Activated CD4-positive, alpha-beta T cell treated with anti-CD3 and anti-CD28 coated beads for 36 hours (primary cell): ENCODE measurements at regions of chr20 and their contacts with region 1.

Region 1: DNA sequence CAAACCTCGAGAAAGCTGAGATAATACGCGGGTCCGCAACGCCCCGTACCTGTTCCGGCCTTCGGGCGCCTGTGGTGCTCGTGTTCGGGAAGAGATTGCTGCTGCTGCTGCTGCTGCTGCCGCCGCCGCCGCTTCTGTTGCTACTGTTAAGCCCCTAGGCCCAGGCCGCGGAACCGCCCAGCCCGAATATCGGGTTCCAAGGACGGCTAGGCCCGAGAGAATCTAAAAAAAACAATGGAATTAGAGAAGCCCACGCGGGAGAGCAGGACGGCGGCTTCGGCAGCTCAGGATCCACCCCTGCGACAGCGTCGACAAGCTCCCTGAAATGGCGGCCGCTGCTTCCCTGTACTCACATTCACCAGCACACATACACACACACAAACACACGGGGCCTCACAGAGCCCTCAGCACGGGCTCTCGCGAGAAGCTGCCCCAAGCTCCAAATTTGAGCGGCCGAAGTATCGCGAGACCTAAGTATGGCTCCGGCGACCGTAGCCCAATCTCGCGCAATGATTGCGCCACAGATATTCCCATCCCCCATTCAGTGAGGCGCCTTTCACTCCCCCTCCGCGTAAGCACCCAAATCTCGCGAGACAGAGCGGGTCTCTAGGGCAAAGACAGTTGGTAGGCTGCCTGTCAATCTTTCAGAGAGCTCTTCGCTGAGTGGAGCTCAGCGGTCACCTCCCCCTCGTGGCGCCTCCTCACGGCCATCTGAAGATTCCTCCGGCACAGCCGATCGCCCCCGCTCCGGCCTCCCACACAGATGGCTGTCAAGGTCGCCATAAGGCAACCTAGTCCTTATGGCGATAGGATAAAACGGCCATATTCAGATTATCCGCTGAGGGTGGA is at the start of gene RBM39:
- DNase-seq: peak; percentile 100
- ATAC-seq: peak; percentile 88
- H3K4me3 Mint-ChIP-seq: peak within 1 kb of the TSS; percentile 90
- H3K27ac Mint-ChIP-seq: peak within 1 kb of the TSS; percentile 100
- H3K4me1 Mint-ChIP-seq: peaks cover 45% of the 10 kb centered on the region
- H3K27me3 Mint-ChIP-seq: no peaks in the 10 kb centered on the region
- total RNA-seq, gene RBM39: 303 to 356 TPM

Region 2: GRCh38 chr20:35511814-35512420 is 230.2 kb before region 1 on chr20:
- CTCF ChIA-PET with region 1: no interaction called
- POLR2A ChIA-PET with region 1: no interaction called
- intact Hi-C with region 1: no loop called
- DNase-seq: no peak
- ATAC-seq: no peak
- H3K4me3 Mint-ChIP-seq: no peak overlapping the region
- H3K27ac Mint-ChIP-seq: peak overlapping the region; percentile 7
- H3K4me1 Mint-ChIP-seq: peaks cover 3% of the 10 kb centered on the region
- H3K27me3 Mint-ChIP-seq: no peaks in the 10 kb centered on the region

Region 3: GRCh38 chr20:35541783-35542588 is 200.1 kb before region 1 on chr20 and contains the start of gene ERGIC3:
- CTCF ChIA-PET with region 1: no interaction called
- POLR2A ChIA-PET with region 1: interaction called, 3 read pairs
- intact Hi-C with region 1: loop called in 1 of 2 experiments (anchors 1 kb)
- DNase-seq: peak; percentile 99
- ATAC-seq: peak; percentile 99
- H3K4me3 Mint-ChIP-seq: peak within 1 kb of the TSS; percentile 83
- H3K27ac Mint-ChIP-seq: peak within 1 kb of the TSS; percentile 83
- H3K4me1 Mint-ChIP-seq: peaks cover 15% of the 10 kb centered on the region
- H3K27me3 Mint-ChIP-seq: no peaks in the 10 kb centered on the region
- total RNA-seq, gene ERGIC3: 109 to 127 TPM

Region 4: GRCh38 chr20:35699127-35699975 is 42.8 kb before region 1 on chr20 and contains the starts of genes NFS1 and ROMO1:
- CTCF ChIA-PET with region 1: interaction called, 10 read pairs
- POLR2A ChIA-PET with region 1: interaction called, 11 read pairs
- intact Hi-C with region 1: no loop called
- DNase-seq: peak; percentile 94
- ATAC-seq: peak; percentile 92
- H3K4me3 Mint-ChIP-seq: peak within 1 kb of the TSS; percentile 87
- H3K27ac Mint-ChIP-seq: peak within 1 kb of the TSS; percentile 98
- H3K4me1 Mint-ChIP-seq: peaks cover 44% of the 10 kb centered on the region
- H3K27me3 Mint-ChIP-seq: no peaks in the 10 kb centered on the region
- total RNA-seq, gene NFS1: 43.2 to 44.6 TPM
- total RNA-seq, gene ROMO1: 50.4 to 112 TPM

Region 5: GRCh38 chr20:35726759-35727711 is 15.1 kb before region 1 on chr20:
- CTCF ChIA-PET with region 1: interaction called, 14 read pairs
- POLR2A ChIA-PET with region 1: interaction called, 12 read pairs
- intact Hi-C with region 1: no loop called
- DNase-seq: no peak
- ATAC-seq: no peak
- H3K4me3 Mint-ChIP-seq: no peak overlapping the region
- H3K27ac Mint-ChIP-seq: no peak overlapping the region
- H3K4me1 Mint-ChIP-seq: peaks cover 39% of the 10 kb centered on the region
- H3K27me3 Mint-ChIP-seq: no peaks in the 10 kb centered on the region

Region 6: DNA sequence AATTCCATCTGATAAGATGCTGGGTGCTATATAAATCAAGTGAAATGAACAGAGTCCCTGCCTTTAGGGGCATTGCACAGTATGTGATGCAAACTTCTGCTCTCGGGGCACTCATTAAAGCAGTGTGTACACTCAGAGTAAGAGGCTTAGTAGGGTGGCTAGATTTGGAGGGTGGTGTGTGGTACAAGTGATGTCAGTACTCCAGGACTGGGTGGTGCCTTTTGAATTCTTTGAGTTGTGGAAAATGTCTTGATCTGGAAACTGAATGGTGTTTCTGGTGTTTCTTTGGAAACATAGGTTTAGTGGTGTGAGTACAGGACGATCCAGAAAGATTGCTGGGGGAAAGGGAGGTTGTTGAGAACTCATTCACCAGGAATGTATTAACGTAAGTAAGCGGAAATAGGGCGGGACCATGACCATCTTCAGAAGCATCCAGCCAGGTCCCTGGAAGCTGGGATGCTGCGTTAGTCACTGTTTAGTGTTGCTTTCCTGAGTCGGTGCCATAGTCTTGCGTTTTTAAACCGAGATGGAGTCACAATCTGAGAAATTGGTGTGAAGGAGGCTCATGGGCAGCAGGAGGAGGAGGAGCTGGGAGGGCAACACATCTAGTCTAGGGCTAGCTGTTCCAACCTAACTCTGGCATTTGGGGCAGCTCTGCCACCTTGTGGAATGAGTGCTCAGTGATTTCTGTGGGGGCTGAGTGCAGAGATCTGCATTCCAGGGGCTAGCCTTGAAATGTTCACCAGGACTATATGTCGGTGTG is 141.8 kb after region 1 on chr20:
- CTCF ChIA-PET with region 1: no interaction called
- POLR2A ChIA-PET with region 1: interaction called, 4 read pairs
- intact Hi-C with region 1: loop called in 1 of 2 experiments (anchors 2 kb)
- DNase-seq: peak; percentile 76
- ATAC-seq: peak; percentile 93
- H3K4me3 Mint-ChIP-seq: no peak overlapping the region
- H3K27ac Mint-ChIP-seq: peak overlapping the region; percentile 66
- H3K4me1 Mint-ChIP-seq: peaks cover 12% of the 10 kb centered on the region
- H3K27me3 Mint-ChIP-seq: no peaks in the 10 kb centered on the region